Mammary epithelial cell (primary cell): ENCODE measurements at regions of chr17 and their contacts with region 1.

Region 1: DNA sequence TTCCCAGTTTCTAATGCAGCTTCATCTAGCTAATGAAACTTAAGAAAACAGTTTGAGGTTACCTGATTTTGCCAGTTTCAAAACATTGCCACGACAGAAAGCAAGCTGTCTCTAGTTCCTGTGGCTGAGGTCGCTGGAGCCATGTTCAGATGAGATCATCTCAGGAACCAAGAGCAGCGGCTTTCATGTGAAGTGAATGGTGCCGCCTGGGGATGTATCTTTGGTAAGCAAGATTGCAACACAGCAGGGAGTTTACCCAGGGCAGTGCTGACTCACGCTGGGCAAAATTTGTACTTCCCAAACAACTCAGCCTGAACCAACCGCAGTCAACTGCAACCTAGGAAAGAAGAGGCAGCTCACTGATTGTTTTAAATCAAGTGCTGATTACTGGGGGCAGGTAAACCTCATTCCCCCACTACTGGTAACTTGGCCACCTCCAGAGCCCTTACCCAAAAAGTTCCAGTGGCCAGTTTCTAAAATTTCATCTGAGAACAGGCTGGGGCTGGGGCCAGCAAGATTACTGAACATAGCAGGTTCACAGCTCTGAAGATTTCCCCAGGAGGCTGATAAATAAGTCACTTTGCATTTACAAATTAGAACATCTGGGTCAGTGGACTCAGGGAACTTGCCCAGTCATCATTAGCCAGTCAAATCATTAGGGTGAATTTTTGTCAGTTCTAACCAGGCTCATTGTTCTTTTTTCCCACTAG is at the start of gene RFFL:
- DNase-seq: peak; percentile 100
- H3K4me3 ChIP-seq: no peak within 1 kb of the TSS
- H3K27ac ChIP-seq: peak within 1 kb of the TSS; percentile 96
- H3K4me1 ChIP-seq: peaks cover 23% of the 10 kb centered on the region
- H3K27me3 ChIP-seq: no peaks in the 10 kb centered on the region
- CTCF ChIP-seq: peak in 1 of 2 donors; percentile 6
- total RNA-seq, gene RFFL: 15.7 to 30.2 TPM

Region 2: DNA sequence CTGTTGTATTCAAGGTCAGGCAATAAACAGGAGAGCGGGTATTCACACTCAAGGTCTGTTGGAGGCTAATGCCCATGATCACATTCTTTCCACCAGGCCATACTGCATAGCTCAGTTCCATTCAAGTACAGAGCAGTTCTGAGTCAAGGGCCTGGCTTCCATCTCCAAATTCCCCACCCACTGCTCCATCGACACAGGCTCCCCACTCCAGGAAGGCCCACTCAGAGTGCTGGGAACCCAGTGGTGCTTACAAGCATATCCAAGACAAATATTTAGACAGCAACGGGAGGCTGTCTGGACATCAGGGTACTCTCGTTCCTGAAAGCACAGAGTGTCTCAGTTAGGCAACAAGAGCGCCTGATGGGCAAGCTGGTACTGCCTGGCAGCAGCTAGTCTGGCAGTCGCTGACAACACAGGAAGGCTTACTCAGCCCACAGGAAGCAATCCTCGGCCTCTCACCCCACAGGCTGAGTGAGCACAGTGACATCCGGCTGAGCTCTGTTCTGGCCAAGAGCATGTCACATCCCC is 41.1 kb before region 1 on chr17:
- CTCF ChIA-PET with region 1: interaction called, 5 read pairs
- dilution Hi-C with region 1: loop called (anchors 5 kb)
- in situ Hi-C with region 1: no loop called
- intact Hi-C with region 1: loop called (anchors 1 kb)
- DNase-seq: peak; percentile 92
- H3K4me3 ChIP-seq: no peak overlapping the region
- H3K27ac ChIP-seq: peak overlapping the region; percentile 94
- H3K4me1 ChIP-seq: peaks cover 38% of the 10 kb centered on the region
- H3K27me3 ChIP-seq: no peaks in the 10 kb centered on the region
- CTCF ChIP-seq: peak; percentile 15 to 26